Posterior vena cava (tissue), 2 donors: ENCODE measurements at regions of chr20 and their contacts with region 1.

Region 1: DNA sequence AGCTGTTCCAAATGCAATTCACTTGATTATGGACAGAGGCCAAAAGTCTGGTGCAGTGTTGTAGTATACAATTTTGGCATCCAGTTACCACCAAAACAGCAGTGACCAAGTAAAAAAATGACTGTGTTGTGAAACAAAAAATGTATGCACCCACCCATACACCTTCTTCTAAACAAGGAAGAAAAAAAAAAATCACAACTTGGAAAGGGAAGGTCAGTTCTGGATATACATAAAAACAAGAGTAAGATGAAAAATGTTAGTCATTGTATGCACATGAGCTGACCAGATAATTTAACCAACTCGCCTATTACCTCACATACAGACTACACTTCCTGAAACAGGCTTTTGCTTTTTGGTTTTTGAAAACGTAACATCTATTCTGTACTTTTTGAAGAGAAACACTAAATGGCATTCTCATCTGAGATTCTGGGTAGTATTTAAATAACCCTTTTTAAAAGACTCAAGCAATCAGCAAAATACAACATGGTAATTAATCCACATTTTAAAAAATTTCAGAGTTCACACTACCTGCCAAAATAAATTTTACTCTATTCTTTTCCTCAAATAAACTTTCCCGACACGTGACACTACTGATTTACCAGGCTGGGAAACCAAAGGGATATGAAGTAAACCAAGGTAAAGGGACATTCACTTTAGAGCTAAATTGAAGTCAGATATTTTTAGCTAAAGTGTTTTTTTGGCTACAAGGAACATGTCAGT is 141.6 kb upstream of the SHLD1 start:
- DNase-seq: no peak

Region 2: GRCh38 chr20:5539691-5540090 is 68.9 kb before region 1 on chr20:
- intact Hi-C with region 1: no loop called
- DNase-seq: no peak

Region 3: DNA sequence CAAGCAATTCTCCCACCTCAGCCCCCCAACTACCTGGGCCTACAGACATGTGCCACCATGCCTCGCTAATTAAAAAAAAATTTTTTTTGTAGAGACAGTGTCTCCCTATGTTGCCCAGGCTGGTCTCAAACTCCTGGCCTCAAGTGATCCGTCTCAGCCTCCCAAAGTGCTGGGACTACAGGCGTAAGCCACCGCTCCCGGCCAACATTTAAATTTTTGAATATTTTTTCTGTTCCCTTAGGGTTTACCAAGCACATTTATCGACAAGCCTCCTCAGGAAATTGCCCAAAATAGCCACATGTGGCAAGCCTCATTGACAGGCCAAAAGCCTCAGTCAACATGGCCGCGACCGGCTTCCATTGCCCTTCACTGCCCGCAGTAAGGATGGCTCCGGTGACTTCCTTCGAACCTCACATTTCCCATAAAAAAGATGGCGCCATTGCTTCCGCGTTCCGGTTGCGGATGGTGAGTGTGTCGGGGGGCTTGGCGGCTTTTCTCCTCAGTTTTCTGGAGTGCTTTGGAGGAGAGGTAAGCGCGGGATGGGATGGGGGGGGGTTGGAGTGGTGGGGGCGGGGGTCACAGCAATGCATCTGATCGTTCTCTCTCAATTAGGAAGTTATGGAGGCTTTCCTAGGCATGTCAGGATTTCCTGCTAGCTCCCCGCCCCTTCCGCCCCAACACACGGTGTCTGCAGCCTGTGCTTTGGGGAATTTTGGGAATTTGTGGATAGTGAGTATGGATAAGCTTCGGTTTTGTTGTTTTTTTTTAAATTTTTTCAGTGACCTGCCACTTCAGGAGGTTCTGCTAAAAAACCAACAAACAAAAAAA is 141.6 kb after region 1 on chr20 and contains the start of gene SHLD1:
- intact Hi-C with region 1: loop called in 1 of 2 experiments (anchors 10 kb)
- DNase-seq: peak; percentile 94
- total RNA-seq, gene SHLD1: 2.7 to 3.3 TPM